GM12878 (cell line): ENCODE measurements at regions of chr6 and their contacts with region 1.

Region 1: DNA sequence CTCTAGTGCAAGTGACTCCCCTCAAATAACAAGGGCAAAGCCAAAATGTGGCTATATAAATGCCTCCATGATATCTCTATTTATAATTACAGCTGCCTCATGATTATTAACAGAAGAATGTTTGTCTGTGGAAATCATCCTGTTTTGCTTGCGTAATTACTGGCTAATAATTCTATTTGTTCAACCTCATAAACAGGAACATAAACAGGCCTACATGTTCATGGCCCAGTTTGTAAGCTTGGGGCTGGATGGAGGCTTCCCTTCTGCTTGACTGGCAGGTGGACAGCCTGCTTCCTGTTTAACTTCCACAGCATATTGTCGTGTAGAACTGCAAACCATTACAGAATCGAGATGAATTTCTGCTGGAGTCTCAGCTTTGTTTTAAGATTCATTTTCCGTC is 766.0 kb upstream of the MAP3K7 start:
- DNase-seq: no peak
- ATAC-seq: no peak
- H3K4me3 ChIP-seq: no peak overlapping the region
- H3K27ac ChIP-seq: no peak overlapping the region
- H3K4me1 ChIP-seq: no peaks in the 10 kb centered on the region
- H3K27me3 ChIP-seq: no peaks in the 10 kb centered on the region
- CTCF ChIP-seq: no peak
- EP300 ChIP-seq: no peak
- POLR2A ChIP-seq: no peak
- RAD21 ChIP-seq: no peak

Region 2: GRCh38 chr6:91276315-91276714 is 76.6 kb before region 1 on chr6:
- CTCF ChIA-PET with region 1: no interaction called
- POLR2A ChIA-PET with region 1: no interaction called
- RAD21 ChIA-PET with region 1: no interaction called
- SMC1A ChIA-PET with region 1: no interaction called
- in situ Hi-C with region 1: no loop called
- intact Hi-C with region 1: no loop called
- DNase-seq: no peak
- ATAC-seq: peak; percentile 86
- H3K4me3 ChIP-seq: no peak overlapping the region
- H3K27ac ChIP-seq: no peak overlapping the region
- H3K4me1 ChIP-seq: no peaks in the 10 kb centered on the region
- H3K27me3 ChIP-seq: no peaks in the 10 kb centered on the region
- CTCF ChIP-seq: peak in 2 of 3 experiments; percentile 33 to 47; a peak in 4 of 6 replicates
- EP300 ChIP-seq: no peak
- POLR2A ChIP-seq: no peak
- RAD21 ChIP-seq: peak; percentile 36; the same call in 1 of the 2 replicates

Region 3: DNA sequence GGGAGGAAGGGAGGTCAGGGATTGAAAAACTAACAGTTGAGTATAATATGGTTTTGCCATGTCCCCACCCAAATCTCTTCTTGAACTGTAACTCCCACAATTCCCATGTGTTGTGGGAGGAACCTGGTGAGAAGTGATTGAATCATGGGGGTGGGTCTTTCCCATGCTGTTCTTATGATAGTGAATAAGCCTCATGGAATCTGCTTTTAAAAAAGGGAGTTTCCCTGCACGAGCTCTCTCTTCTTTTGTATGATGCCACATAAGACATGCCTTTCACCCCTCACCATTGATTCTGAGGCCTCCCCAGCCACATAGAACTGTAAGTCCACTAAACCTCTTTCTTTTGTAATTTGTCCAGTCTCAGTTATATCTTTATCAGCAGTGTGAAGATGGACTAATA is 67.4 kb after region 1 on chr6:
- CTCF ChIA-PET with region 1: no interaction called
- POLR2A ChIA-PET with region 1: no interaction called
- RAD21 ChIA-PET with region 1: no interaction called
- SMC1A ChIA-PET with region 1: no interaction called
- in situ Hi-C with region 1: no loop called
- intact Hi-C with region 1: no loop called
- DNase-seq: no peak
- ATAC-seq: no peak
- H3K4me3 ChIP-seq: no peak overlapping the region
- H3K27ac ChIP-seq: no peak overlapping the region
- H3K4me1 ChIP-seq: no peaks in the 10 kb centered on the region
- H3K27me3 ChIP-seq: no peaks in the 10 kb centered on the region
- CTCF ChIP-seq: no peak
- EP300 ChIP-seq: no peak
- POLR2A ChIP-seq: no peak
- RAD21 ChIP-seq: no peak

Region 4: GRCh38 chr6:91534614-91535013 is 181.7 kb after region 1 on chr6:
- CTCF ChIA-PET with region 1: no interaction called
- POLR2A ChIA-PET with region 1: no interaction called
- RAD21 ChIA-PET with region 1: no interaction called
- SMC1A ChIA-PET with region 1: no interaction called
- in situ Hi-C with region 1: no loop called
- intact Hi-C with region 1: loop called (anchors 5 kb)
- DNase-seq: no peak
- ATAC-seq: no peak
- H3K4me3 ChIP-seq: no peak overlapping the region
- H3K27ac ChIP-seq: no peak overlapping the region
- H3K4me1 ChIP-seq: no peaks in the 10 kb centered on the region
- H3K27me3 ChIP-seq: no peaks in the 10 kb centered on the region
- CTCF ChIP-seq: no peak; a peak in 1 of 6 replicates
- EP300 ChIP-seq: no peak
- POLR2A ChIP-seq: no peak
- RAD21 ChIP-seq: peak; percentile 48